Esophagus muscularis mucosa (tissue), 4 donors: ENCODE measurements at regions of chr10 and their contacts with region 1.

Region 1: GRCh38 chr10:99620713-99621453 is 644 bp upstream of the SLC25A28 start:
- DNase-seq: peak; percentile 99
- H3K4me3 ChIP-seq: peak overlapping the region; percentile 83 to 95 (median 88)
- H3K27ac ChIP-seq: peak overlapping the region; percentile 93 to 97 (median 96)
- H3K4me1 ChIP-seq: peaks cover 31 to 50% (median 45%) of the 10 kb centered on the region in 4 donors
- H3K27me3 ChIP-seq: no peaks in the 10 kb centered on the region
- CTCF ChIP-seq: no peak
- EP300 ChIP-seq: peak; percentile 48
- POLR2A ChIP-seq: peak; percentile 62

Region 2: GRCh38 chr10:98446661-98447221 is 1174.1 kb before region 1 on chr10 and contains the start of gene HPS1:
- intact Hi-C with region 1: loop called (anchors 10 kb)
- DNase-seq: peak; percentile 94
- H3K4me3 ChIP-seq: peak within 1 kb of the TSS; percentile 91 to 96 (median 94)
- H3K27ac ChIP-seq: peak within 1 kb of the TSS; percentile 93 to 96 (median 94)
- H3K4me1 ChIP-seq: peaks cover 9 to 39% (median 30%) of the 10 kb centered on the region in 4 donors
- H3K27me3 ChIP-seq: no peaks in the 10 kb centered on the region
- CTCF ChIP-seq: peak in 1 of 3 experiments; percentile 31
- EP300 ChIP-seq: no peak
- POLR2A ChIP-seq: peak; percentile 81
- total RNA-seq, gene HPS1: 49.7 to 76.1 (median 63.7) TPM

Region 3: DNA sequence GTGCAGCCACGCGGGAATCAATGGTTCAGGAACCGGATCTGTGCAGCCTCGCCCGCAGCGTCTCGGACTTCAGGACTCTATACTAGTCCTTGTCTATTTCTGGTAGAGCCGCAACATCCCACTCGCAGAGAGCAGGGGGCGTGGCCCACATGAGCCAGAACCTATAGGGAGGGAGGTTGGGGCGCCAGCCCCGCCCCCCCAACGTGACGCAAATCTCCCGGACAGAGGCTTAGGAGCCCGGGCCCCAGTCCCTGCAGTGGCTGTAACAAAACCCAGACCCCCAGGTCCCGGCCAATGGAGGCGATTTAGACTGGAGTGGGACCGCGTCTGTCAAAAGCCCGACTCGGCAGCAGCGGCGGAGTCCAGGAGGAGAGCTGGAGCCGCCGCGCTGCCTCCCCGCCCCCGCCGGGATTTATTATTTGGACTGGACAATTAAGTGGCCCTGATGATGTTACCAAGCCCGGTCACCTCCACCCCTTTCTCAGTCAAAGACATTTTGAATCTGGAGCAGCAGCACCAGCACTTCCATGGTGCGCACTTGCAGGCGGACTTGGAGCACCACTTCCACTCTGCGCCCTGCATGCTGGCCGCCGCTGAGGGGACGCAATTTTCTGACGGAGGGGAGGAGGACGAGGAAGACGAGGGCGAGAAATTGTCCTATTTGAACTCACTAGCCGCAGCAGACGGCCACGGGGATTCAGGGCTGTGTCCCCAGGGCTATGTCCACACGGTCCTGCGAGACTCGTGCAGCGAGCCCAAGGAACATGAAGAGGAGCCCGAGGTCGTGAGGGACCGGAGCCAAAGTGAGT is 88.0 kb before region 1 on chr10 and contains the start of gene NKX2-3:
- intact Hi-C with region 1: no loop called
- DNase-seq: no peak
- H3K4me3 ChIP-seq: peak within 1 kb of the TSS; percentile 24 to 39 (median 31)
- H3K27ac ChIP-seq: no peak within 1 kb of the TSS
- H3K4me1 ChIP-seq: peaks cover 34 to 82% (median 67%) of the 10 kb centered on the region in 4 donors
- H3K27me3 ChIP-seq: peaks cover 13 to 100% (median 94%) of the 10 kb centered on the region in 4 donors
- CTCF ChIP-seq: no peak
- EP300 ChIP-seq: no peak
- POLR2A ChIP-seq: no peak
- total RNA-seq, gene NKX2-3: 0.19 to 0.34 TPM in 2 of 4 donors, not detected in the others

Region 4: DNA sequence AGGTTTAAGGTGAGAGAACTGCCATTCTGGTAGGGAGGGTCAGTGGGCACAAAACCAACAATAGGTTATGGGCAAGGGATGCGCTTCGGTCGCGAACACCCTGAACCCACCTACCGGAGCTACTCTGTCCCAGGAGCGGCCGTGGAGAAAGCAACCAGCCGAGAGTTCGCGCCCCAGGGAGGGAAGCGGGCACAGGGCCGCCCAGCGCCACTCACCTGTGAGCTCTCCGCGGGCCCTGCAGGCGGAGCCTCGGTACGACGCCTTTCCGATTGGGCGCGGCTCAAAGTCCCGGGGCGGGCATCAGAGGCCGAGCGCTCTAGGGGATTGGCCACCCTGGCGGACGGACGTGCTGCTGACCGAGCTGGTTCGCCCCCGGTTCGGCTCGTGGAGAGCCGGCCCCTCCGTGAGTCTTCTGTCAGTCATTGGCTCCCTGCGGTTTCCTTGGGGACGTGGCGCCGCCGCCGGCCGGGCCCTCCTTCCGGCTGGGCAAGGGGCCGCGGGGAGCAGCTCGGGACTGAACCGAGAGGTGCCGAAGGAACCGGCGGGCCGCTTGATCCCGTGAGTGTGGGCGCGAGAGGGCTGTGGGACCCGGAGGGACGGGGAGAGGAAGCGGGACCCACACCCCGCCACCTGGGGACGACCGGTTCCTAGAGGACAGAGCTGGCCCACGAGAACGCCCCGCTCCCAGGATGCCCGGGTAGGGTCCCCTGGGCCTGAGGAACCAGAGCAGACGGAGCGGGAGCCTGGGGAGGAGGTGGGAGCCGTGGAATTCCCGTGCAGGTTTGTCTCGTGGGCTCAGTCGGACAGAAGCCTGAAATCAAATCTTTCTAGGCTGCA is 38.4 kb after region 1 on chr10 and contains the start of gene ENTPD7:
- intact Hi-C with region 1: loop called (anchors 5 kb)
- DNase-seq: peak; percentile 98
- H3K4me3 ChIP-seq: peak within 1 kb of the TSS; percentile 75 to 85 (median 82)
- H3K27ac ChIP-seq: peak within 1 kb of the TSS in 3 of 4 donors; percentile 29 to 61 (median 51)
- H3K4me1 ChIP-seq: peaks cover 10 to 23% (median 20%) of the 10 kb centered on the region in 4 donors
- H3K27me3 ChIP-seq: no peaks in the 10 kb centered on the region
- CTCF ChIP-seq: peak; percentile 13 to 52 (median 51)
- EP300 ChIP-seq: no peak
- POLR2A ChIP-seq: no peak
- total RNA-seq, gene ENTPD7: 3.3 to 4.8 (median 4.4) TPM

Region 5: DNA sequence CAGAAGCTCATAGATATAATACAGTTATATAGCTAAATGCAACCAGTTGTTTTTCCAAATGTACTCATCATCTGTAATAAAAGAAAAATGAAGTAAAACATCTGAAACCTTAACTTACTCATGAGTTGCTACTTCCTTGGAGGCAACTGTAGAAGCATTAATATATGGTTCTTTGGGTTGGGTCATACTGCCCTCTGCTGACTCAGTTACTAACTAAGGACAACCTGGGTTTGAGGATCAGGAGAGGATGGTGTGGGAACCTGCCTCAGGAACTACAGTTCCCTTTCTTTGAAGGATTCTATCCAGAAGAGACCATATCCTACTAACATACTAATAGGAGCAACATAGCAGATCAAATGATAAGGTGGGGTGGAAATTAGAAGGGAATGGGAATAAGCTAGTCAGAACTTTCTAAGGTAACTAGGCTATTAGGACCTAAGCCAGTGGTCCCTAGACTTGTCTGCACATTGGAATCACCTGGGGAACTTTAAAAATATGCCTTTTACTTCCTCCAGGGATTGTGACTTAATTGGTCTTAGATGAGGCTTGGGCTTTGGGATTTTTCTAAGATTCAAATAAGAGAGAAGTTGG is 90.3 kb after region 1 on chr10:
- intact Hi-C with region 1: loop called (anchors 5 kb)
- DNase-seq: no peak
- H3K4me3 ChIP-seq: no peak overlapping the region
- H3K27ac ChIP-seq: no peak overlapping the region
- H3K4me1 ChIP-seq: peaks cover 0 to 31% (median 24%) of the 10 kb centered on the region in 4 donors
- H3K27me3 ChIP-seq: no peaks in the 10 kb centered on the region
- CTCF ChIP-seq: peak; percentile 33 to 43 (median 34)
- EP300 ChIP-seq: no peak
- POLR2A ChIP-seq: no peak

Region 6: GRCh38 chr10:99732033-99732912 is 111.4 kb after region 1 on chr10 and contains the starts of genes COX15 and CUTC:
- intact Hi-C with region 1: loop called (anchors 5 kb)
- DNase-seq: peak; percentile 99
- H3K4me3 ChIP-seq: peak within 1 kb of the TSS; percentile 78 to 84 (median 80)
- H3K27ac ChIP-seq: peak within 1 kb of the TSS; percentile 87 to 96 (median 92)
- H3K4me1 ChIP-seq: peaks cover 23 to 42% (median 36%) of the 10 kb centered on the region in 4 donors
- H3K27me3 ChIP-seq: no peaks in the 10 kb centered on the region
- CTCF ChIP-seq: peak; percentile 11 to 40 (median 25)
- EP300 ChIP-seq: no peak
- POLR2A ChIP-seq: peak; percentile 86
- total RNA-seq, gene COX15: 21.0 to 30.5 (median 24.1) TPM
- total RNA-seq, gene CUTC: 17.6 to 28.7 (median 24.1) TPM

Region 7: GRCh38 chr10:100481462-100482081 is 860.7 kb after region 1 on chr10:
- intact Hi-C with region 1: no loop called
- DNase-seq: peak; percentile 98
- H3K4me3 ChIP-seq: peak overlapping the region; percentile 52 to 60 (median 56)
- H3K27ac ChIP-seq: no peak overlapping the region
- H3K4me1 ChIP-seq: peaks cover 13 to 20% (median 16%) of the 10 kb centered on the region in 4 donors
- H3K27me3 ChIP-seq: peaks cover 0 to 36% (median 3%) of the 10 kb centered on the region in 4 donors
- CTCF ChIP-seq: no peak
- EP300 ChIP-seq: no peak
- POLR2A ChIP-seq: no peak